AG04450 (cell line): ENCODE measurements at regions of chr4 and their contacts with region 1.

Region 1: DNA sequence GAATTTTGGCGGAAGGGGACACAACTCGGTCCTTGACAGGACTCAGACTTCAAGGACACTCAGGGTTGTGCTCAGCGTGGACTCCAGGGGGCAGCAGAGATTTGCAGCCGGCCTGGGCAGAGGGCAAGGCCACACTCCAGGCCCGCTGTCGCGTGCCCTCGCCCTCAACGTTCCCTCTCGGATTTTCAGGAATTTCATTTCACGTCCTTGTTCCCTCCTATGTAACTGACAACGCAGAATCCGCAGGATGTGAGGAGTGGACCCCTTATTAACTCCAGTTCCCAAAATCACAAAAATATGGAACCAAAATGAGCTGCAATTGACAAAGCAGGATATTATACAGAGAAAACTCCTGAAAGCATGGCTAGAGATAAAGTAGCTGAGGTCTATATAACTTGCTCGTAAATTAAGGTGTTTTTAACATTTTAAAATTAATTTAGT is 21.0 kb upstream of the DCTD start:
- DNase-seq: no peak
- H3K4me3 ChIP-seq: no peak overlapping the region
- H3K27ac ChIP-seq: no peak overlapping the region
- H3K27me3 ChIP-seq: peaks cover 11% of the 10 kb centered on the region
- CTCF ChIP-seq: peak; percentile 95

Region 2: GRCh38 chr4:182925298-182925738 is 12.9 kb before region 1 on chr4:
- CTCF ChIA-PET with region 1: interaction called, 48 read pairs
- POLR2A ChIA-PET with region 1: no interaction called
- DNase-seq: no peak
- H3K4me3 ChIP-seq: no peak overlapping the region
- H3K27ac ChIP-seq: peak overlapping the region; percentile 47
- H3K27me3 ChIP-seq: no peaks in the 10 kb centered on the region
- CTCF ChIP-seq: peak; percentile 68

Region 3: DNA sequence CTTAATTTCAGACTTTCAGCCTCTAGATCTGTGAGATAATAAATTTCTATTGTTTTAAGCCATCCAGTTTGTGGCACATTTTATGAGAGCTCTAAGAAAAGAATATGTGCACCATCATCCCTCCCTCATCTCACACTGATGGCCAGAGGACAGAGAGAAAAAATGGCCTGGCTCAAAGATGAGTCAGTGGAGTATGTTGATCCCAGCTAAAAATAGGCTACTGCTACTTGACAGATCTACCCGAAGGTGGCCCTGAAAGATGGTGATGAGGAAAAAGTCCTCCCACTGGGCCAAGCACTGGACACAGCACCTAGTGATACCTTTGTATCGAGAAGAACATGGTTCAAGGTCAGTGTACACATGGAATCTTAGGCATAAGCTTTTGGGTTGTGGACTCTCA is 17.2 kb after region 1 on chr4:
- CTCF ChIA-PET with region 1: interaction called, 22 read pairs
- POLR2A ChIA-PET with region 1: no interaction called
- DNase-seq: no peak
- H3K4me3 ChIP-seq: no peak overlapping the region
- H3K27ac ChIP-seq: no peak overlapping the region
- H3K27me3 ChIP-seq: no peaks in the 10 kb centered on the region
- CTCF ChIP-seq: no peak

Region 4: GRCh38 chr4:182969651-182970269 is 31.5 kb after region 1 on chr4:
- CTCF ChIA-PET with region 1: interaction called, 12 read pairs
- POLR2A ChIA-PET with region 1: no interaction called
- DNase-seq: no peak
- H3K4me3 ChIP-seq: no peak overlapping the region
- H3K27ac ChIP-seq: no peak overlapping the region
- H3K27me3 ChIP-seq: no peaks in the 10 kb centered on the region
- CTCF ChIP-seq: no peak

Region 5: GRCh38 chr4:183249857-183250256 is 311.6 kb after region 1 on chr4:
- CTCF ChIA-PET with region 1: interaction called, 66 read pairs
- POLR2A ChIA-PET with region 1: no interaction called
- DNase-seq: no peak
- H3K4me3 ChIP-seq: no peak overlapping the region
- H3K27ac ChIP-seq: no peak overlapping the region
- H3K27me3 ChIP-seq: no peaks in the 10 kb centered on the region
- CTCF ChIP-seq: peak; percentile 45

Region 6: GRCh38 chr4:183256756-183257385 is 318.6 kb after region 1 on chr4:
- CTCF ChIA-PET with region 1: interaction called, 180 read pairs
- POLR2A ChIA-PET with region 1: no interaction called
- DNase-seq: no peak
- H3K4me3 ChIP-seq: no peak overlapping the region
- H3K27ac ChIP-seq: no peak overlapping the region
- H3K27me3 ChIP-seq: no peaks in the 10 kb centered on the region
- CTCF ChIP-seq: peak; percentile 81

Region 7: DNA sequence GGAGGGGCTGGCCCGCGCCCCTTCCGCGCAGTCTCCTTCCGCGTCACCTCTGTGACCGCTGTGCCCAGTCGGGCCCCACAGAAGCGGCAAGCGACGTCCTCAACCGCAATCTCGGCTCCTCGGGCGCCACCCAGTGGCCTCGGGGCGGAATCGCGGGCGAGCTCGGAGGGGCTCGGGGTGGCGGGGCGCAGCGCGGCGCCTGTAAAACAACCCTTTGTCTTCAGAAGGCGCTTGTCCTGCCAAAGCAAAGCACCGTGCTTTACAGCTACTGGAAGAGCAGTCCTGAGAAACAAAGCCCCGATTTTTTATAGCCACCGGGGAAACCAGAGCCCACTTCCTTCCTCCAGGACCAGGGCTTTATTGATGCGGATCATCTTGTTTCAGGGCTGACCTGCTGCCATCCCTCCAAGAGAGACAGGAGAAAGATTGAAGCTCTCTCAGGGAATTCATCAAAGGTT is 468.9 kb after region 1 on chr4:
- CTCF ChIA-PET with region 1: interaction called, 10 read pairs
- POLR2A ChIA-PET with region 1: no interaction called
- DNase-seq: peak; percentile 13
- H3K4me3 ChIP-seq: peak overlapping the region; percentile 68
- H3K27ac ChIP-seq: no peak overlapping the region
- H3K27me3 ChIP-seq: no peaks in the 10 kb centered on the region
- CTCF ChIP-seq: peak; percentile 81